Caco-2 (cell line): ENCODE measurements at regions of chr11 and their contacts with region 1.

Region 1: DNA sequence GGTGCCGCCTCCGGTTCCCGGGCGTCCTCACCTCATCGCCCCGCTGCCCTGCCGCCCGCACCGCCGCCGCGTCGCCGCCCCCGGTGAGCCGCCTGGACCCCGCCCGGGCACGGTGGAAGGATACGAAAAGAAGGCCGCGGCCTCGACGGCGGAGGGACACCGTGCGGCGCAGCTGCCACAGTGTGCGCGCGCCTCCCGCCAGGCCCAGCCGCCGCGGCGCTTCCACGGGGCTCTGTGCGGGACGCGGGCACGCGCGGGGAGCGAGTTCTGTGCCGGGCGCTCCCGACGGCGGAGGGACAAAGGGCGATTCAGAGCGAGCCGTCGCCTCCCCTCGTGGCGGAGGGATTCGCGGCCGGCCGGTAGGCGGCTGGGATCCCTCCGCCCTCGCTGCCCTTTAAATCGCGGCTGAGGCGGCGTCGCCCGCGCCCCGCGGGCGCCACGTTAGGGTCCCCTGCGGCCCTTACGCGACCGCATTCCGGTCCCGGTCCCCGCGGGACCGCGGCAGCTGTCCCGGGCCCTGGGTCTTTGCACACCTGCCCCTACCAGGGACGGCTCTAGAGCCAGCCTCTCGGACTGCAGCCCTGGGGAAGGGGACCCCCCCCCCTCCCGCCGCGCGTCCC is 569 bp upstream of the KMT5B start:
- DNase-seq: peak; percentile 95 to 97
- H3K4me3 ChIP-seq: peak overlapping the region; percentile 99
- H3K4me3 Mint-ChIP-seq: peak overlapping the region; percentile 86
- H3K27ac Mint-ChIP-seq: peak overlapping the region; percentile 85
- H3K4me1 ChIP-seq: peaks cover 21% of the 10 kb centered on the region
- H3K4me1 Mint-ChIP-seq: peaks cover 32% of the 10 kb centered on the region
- H3K27me3 ChIP-seq: no peaks in the 10 kb centered on the region
- H3K27me3 Mint-ChIP-seq: no peaks in the 10 kb centered on the region
- CTCF ChIP-seq: no peak

Region 2: DNA sequence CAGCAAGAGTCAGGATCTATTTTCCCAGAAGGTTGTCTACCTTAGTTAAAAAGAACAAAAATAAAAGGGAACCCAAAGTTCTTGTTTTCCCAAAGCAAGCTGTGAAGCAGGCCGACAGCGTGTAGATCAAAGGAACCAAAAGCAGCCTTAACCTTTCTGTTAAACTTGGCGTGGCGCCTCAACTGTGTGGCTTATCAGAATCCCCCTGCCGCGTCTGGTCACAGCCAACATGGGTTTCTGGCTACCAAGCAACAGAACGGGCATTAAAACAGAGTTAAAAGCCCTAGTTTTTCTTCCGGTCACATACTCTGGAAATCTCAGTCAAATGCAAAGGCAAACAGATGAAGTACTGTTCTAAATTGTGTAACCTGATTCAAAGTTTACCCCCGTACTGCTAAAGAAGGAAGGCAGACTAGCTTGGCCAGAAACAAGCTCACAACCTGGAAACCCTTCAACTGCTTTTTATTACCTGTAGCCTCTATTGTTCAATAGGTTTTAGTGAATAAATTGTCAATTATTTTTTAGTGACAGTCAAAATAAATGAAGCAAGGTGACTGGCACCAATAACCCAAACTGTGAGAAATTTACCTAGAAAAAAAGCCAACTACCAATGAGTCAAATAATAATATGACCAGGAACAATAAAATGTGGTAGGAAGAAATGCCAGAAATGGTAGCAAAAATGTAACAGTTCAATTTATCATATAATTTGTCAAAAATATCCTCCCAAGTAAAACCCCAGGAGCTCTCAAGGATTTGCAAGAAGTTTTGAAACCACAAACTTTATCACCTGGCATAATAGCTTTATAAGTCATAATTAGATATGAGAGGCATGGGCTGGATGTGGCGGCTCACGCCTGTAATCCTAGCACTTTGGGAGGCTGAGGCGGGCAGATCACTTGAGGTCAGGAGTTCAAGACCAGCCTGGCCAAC is 113.9 kb before region 1 on chr11:
- CTCF ChIA-PET with region 1: interaction called, 12 read pairs
- POLR2A ChIA-PET with region 1: no interaction called
- intact Hi-C with region 1: no loop called
- DNase-seq: peak; percentile 65 to 72
- H3K4me3 ChIP-seq: no peak overlapping the region
- H3K4me3 Mint-ChIP-seq: peak overlapping the region; percentile 57
- H3K27ac Mint-ChIP-seq: peak overlapping the region; percentile 61
- H3K4me1 ChIP-seq: peaks cover 20% of the 10 kb centered on the region
- H3K4me1 Mint-ChIP-seq: peaks cover 48% of the 10 kb centered on the region
- H3K27me3 ChIP-seq: no peaks in the 10 kb centered on the region
- H3K27me3 Mint-ChIP-seq: no peaks in the 10 kb centered on the region
- CTCF ChIP-seq: no peak

Region 3: DNA sequence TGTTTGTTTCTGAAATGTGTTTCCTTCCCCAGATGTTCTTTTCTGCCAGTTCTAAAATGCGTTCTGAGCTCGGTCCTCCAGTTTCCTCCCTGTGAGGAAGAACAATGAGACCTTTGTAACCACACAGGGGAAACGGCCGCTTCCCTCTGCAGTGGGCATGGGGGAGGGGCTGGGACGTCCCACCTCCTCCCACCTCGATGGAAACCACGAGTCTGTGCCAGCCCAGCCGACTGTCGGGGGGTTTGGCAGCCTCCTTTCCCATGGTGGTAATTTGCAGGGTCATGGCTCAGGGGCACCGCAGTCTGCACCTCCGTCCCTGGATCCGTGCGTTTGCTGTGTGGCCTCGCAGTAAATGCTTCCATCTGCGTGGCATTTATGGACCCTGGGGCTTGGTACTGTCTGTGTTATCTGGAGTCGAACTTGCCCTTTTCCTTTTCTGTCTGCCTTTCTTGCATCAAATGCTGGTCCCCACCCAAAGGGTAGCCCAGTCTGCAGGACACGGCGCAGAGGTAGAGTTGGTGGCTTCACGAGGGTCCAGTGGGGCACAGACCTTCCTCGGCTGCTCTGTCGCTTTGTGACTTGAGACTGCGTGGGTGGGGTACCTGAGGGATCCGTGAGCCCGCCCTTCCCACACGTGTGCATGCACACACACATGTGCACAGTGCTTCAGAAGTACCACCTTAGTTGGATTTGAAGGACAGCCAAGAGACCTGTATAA is 114.9 kb after region 1 on chr11:
- CTCF ChIA-PET with region 1: interaction called, 10 read pairs
- POLR2A ChIA-PET with region 1: no interaction called
- intact Hi-C with region 1: no loop called
- DNase-seq: no peak
- H3K4me3 ChIP-seq: no peak overlapping the region
- H3K4me3 Mint-ChIP-seq: no peak overlapping the region
- H3K27ac Mint-ChIP-seq: no peak overlapping the region
- H3K4me1 ChIP-seq: peaks cover 38% of the 10 kb centered on the region
- H3K4me1 Mint-ChIP-seq: peaks cover 37% of the 10 kb centered on the region
- H3K27me3 ChIP-seq: no peaks in the 10 kb centered on the region
- H3K27me3 Mint-ChIP-seq: no peaks in the 10 kb centered on the region
- CTCF ChIP-seq: no peak

Region 4: GRCh38 chr11:68447015-68447801 is 233.5 kb after region 1 on chr11:
- CTCF ChIA-PET with region 1: no interaction called
- POLR2A ChIA-PET with region 1: no interaction called
- intact Hi-C with region 1: loop called (anchors 1 kb)
- DNase-seq: peak; percentile 87 to 92
- H3K4me3 ChIP-seq: no peak overlapping the region
- H3K4me3 Mint-ChIP-seq: no peak overlapping the region
- H3K27ac Mint-ChIP-seq: peak overlapping the region; percentile 65
- H3K4me1 ChIP-seq: no peaks in the 10 kb centered on the region
- H3K4me1 Mint-ChIP-seq: no peaks in the 10 kb centered on the region
- H3K27me3 ChIP-seq: no peaks in the 10 kb centered on the region
- H3K27me3 Mint-ChIP-seq: no peaks in the 10 kb centered on the region
- CTCF ChIP-seq: peak; percentile 98 to 99